Activated CD4-positive, alpha-beta memory T cell treated with anti-CD3 and anti-CD28 coated beads, Interleukin-2, amount 10 ng/mL, durations not matched to agents 7 days and 5 days (primary cell): ENCODE measurements at regions of chr4 and their contacts with region 1.

Region 1: DNA sequence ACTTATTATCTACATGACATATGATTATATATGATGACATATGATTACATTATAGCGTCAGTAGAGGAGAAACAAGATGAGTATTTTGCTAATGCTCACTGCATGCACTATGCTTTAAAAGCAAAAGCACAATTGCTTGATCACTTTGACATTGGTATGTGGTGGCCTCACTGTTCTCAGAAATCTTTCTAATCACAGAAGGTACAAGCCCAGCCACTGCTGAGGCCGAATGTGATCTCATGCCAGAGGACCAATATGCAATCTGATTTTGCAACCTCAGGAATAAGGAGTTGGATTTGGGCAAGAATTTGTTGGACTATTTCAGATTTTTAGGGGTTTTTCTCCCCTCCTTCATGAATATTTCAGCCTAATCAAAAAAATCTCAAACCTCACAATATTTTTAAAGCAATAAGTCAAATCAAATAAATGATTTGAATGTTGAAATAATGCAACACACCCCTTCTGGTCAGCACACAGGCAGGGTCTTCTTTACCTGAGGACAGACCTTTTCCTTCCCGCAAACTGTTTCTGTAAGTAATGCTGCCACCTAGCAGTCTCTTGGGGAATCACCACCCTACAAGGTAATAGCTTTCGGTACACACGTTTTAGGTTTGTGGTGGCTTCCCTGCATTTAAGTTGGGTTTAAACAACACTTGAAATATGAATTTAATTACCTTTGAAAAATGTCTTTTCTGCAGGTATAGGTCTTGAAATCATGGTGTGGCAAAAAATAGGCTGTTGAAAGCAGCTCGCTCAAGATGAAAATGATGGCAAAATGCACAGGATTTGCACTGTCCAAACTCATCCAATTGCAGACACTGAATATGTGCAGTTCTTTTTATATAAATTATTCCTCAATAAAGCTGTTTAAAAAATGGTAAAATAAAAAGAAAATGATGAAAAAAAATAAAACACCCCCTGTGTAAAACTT is 4.8 kb upstream of the CXCL13 start:
- DNase-seq: peak; percentile 23
- H3K4me3 Mint-ChIP-seq: no peak overlapping the region
- H3K27ac Mint-ChIP-seq: no peak overlapping the region
- H3K4me1 Mint-ChIP-seq: no peaks in the 10 kb centered on the region
- H3K27me3 Mint-ChIP-seq: peaks cover 41% of the 10 kb centered on the region

Region 2: DNA sequence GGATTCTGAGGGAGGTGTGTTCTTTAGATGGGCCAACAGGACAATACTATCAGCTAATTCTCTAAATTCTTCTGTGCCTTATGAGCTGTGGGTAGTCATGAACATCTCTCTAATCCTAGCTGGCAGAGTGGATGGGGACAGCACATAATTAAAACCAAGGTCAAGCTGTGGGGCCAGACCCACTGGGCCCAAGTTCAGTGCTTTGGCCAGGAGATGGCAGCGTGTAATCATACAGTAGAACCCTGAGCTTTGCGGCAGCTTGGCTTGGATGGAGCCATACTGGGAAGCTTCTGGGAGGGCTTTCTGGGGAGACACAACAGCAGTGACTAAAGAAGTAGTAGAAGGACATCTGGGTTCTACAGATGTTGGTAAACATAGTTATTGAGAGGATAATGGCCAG is 135.5 kb before region 1 on chr4:
- CTCF ChIA-PET with region 1: interaction called, 20 read pairs
- POLR2A ChIA-PET with region 1: no interaction called
- DNase-seq: no peak
- H3K4me3 Mint-ChIP-seq: no peak overlapping the region
- H3K27ac Mint-ChIP-seq: no peak overlapping the region
- H3K4me1 Mint-ChIP-seq: no peaks in the 10 kb centered on the region
- H3K27me3 Mint-ChIP-seq: peaks cover 13% of the 10 kb centered on the region

Region 3: GRCh38 chr4:77613267-77613666 is 12.5 kb after region 1 on chr4:
- CTCF ChIA-PET with region 1: interaction called, 10 read pairs
- POLR2A ChIA-PET with region 1: interaction called, 5 read pairs
- DNase-seq: no peak
- H3K4me3 Mint-ChIP-seq: no peak overlapping the region
- H3K27ac Mint-ChIP-seq: no peak overlapping the region
- H3K4me1 Mint-ChIP-seq: peaks cover 1% of the 10 kb centered on the region
- H3K27me3 Mint-ChIP-seq: peaks cover 22% of the 10 kb centered on the region

Region 4: GRCh38 chr4:77745792-77746191 is 145.0 kb after region 1 on chr4:
- CTCF ChIA-PET with region 1: no interaction called
- POLR2A ChIA-PET with region 1: no interaction called
- DNase-seq: no peak
- H3K4me3 Mint-ChIP-seq: no peak overlapping the region
- H3K27ac Mint-ChIP-seq: no peak overlapping the region
- H3K4me1 Mint-ChIP-seq: peaks cover 2% of the 10 kb centered on the region
- H3K27me3 Mint-ChIP-seq: no peaks in the 10 kb centered on the region